Activated CD8-positive, alpha-beta memory T cell treated with anti-CD3 and anti-CD28 coated beads, Interleukin-2, amount 10 ng/mL, durations not matched to agents 7 days and 5 days (primary cell): ENCODE measurements at regions of chr2 and their contacts with region 1.

Region 1: GRCh38 chr2:74119912-74120825 is 27.5 kb downstream of the BOLA3 start:
- DNase-seq: peak; percentile 91
- ATAC-seq: peak; percentile 99
- H3K4me3 Mint-ChIP-seq: peak overlapping the region; percentile 83
- H3K27ac Mint-ChIP-seq: peak overlapping the region; percentile 94
- H3K4me1 Mint-ChIP-seq: peaks cover 12% of the 10 kb centered on the region
- H3K27me3 Mint-ChIP-seq: no peaks in the 10 kb centered on the region

Region 2: GRCh38 chr2:74147727-74148456 is 27.7 kb after region 1 on chr2 and contains the start of gene BOLA3:
- CTCF ChIA-PET with region 1: interaction called, 18 read pairs
- DNase-seq: peak; percentile 92
- ATAC-seq: peak; percentile 98
- H3K4me3 Mint-ChIP-seq: no peak within 1 kb of the TSS
- H3K27ac Mint-ChIP-seq: no peak within 1 kb of the TSS
- H3K4me1 Mint-ChIP-seq: peaks cover 4% of the 10 kb centered on the region
- H3K27me3 Mint-ChIP-seq: no peaks in the 10 kb centered on the region
- total RNA-seq, gene BOLA3: 69.5 to 76.1 TPM